Activated CD4-positive, alpha-beta memory T cell treated with anti-CD3 and anti-CD28 coated beads for 36 hours (primary cell): ENCODE measurements at regions of chr1 and their contacts with region 1.

Region 1: DNA sequence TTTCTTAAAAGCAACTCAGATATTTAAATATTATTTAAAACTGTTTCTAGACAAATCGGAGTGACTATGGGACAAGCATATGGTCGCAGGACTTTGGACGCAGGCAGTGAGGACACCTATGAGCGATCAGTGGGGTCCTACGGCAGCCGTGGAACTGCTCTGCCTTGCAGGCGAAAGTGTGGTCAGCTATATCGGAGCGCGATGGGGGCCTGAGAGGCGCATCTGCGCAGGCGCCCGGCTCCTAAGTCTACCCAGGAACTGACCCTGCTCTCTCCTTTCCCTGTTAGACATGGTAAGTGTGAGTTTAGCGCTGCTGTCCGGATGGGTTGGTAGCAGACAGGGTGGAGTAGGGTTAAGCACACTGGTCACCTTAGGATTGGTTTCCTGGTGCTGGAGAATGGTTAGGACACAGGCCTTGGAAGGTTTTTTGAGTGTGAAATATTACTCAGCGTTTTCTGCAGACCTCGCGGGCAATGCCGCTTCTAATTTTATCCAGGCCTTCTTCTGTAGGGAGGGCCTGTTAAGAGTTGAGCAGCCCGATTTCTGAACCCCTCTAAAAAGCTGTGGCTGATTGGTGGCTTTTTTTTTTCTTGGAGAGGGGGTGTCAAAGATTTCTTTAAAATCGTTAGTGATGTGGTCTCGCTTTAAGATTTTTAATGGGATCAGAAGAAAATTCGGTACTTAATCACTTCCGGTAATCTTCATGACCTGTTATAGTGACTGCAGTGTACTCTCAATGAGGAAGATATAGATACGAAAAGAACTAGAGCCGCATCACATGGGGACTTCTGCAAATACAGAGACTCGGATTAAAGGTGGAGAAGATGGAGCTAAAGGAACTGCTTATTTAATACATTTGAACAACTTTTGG is at the start of gene RABGGTB:
- DNase-seq: peak; percentile 96
- H3K4me3 Mint-ChIP-seq: peak within 1 kb of the TSS; percentile 99
- H3K27ac Mint-ChIP-seq: peak within 1 kb of the TSS; percentile 97
- H3K4me1 Mint-ChIP-seq: peaks cover 28% of the 10 kb centered on the region
- H3K27me3 Mint-ChIP-seq: no peaks in the 10 kb centered on the region
- total RNA-seq, gene RABGGTB: 158 to 170 TPM

Region 2: GRCh38 chr1:75712306-75712705 is 73.9 kb before region 1 on chr1:
- CTCF ChIA-PET with region 1: no interaction called
- POLR2A ChIA-PET with region 1: no interaction called
- intact Hi-C with region 1: no loop called
- DNase-seq: no peak
- H3K4me3 Mint-ChIP-seq: no peak overlapping the region
- H3K27ac Mint-ChIP-seq: no peak overlapping the region
- H3K4me1 Mint-ChIP-seq: no peaks in the 10 kb centered on the region
- H3K27me3 Mint-ChIP-seq: peaks cover 15% of the 10 kb centered on the region

Region 3: GRCh38 chr1:75724472-75725022 is 61.7 kb before region 1 on chr1 and contains the start of gene ACADM:
- CTCF ChIA-PET with region 1: interaction called, 3 read pairs
- POLR2A ChIA-PET with region 1: interaction called, 7 read pairs
- intact Hi-C with region 1: loop called (anchors 1 kb)
- DNase-seq: peak; percentile 91
- H3K4me3 Mint-ChIP-seq: peak within 1 kb of the TSS; percentile 100
- H3K27ac Mint-ChIP-seq: peak within 1 kb of the TSS; percentile 99
- H3K4me1 Mint-ChIP-seq: peaks cover 28% of the 10 kb centered on the region
- H3K27me3 Mint-ChIP-seq: no peaks in the 10 kb centered on the region
- total RNA-seq, gene ACADM: 60.3 to 60.9 TPM

Region 4: GRCh38 chr1:75796376-75797272 is 10.4 kb after region 1 on chr1 and contains the start of gene MSH4:
- CTCF ChIA-PET with region 1: no interaction called
- POLR2A ChIA-PET with region 1: interaction called, 20 read pairs
- intact Hi-C with region 1: no loop called
- DNase-seq: peak; percentile 25
- H3K4me3 Mint-ChIP-seq: no peak within 1 kb of the TSS
- H3K27ac Mint-ChIP-seq: peak within 1 kb of the TSS; percentile 1
- H3K4me1 Mint-ChIP-seq: peaks cover 14% of the 10 kb centered on the region
- H3K27me3 Mint-ChIP-seq: no peaks in the 10 kb centered on the region
- total RNA-seq, gene MSH4: 0.12 to 0.43 TPM

Region 5: GRCh38 chr1:76074321-76075187 is 288.3 kb after region 1 on chr1 and contains the start of gene ST6GALNAC3:
- CTCF ChIA-PET with region 1: no interaction called
- POLR2A ChIA-PET with region 1: no interaction called
- intact Hi-C with region 1: loop called (anchors 5 kb)
- DNase-seq: peak; percentile 81
- H3K4me3 Mint-ChIP-seq: peak within 1 kb of the TSS; percentile 76
- H3K27ac Mint-ChIP-seq: no peak within 1 kb of the TSS
- H3K4me1 Mint-ChIP-seq: peaks cover 13% of the 10 kb centered on the region
- H3K27me3 Mint-ChIP-seq: no peaks in the 10 kb centered on the region
- total RNA-seq, gene ST6GALNAC3: 0.26 to 0.41 TPM

Region 6: DNA sequence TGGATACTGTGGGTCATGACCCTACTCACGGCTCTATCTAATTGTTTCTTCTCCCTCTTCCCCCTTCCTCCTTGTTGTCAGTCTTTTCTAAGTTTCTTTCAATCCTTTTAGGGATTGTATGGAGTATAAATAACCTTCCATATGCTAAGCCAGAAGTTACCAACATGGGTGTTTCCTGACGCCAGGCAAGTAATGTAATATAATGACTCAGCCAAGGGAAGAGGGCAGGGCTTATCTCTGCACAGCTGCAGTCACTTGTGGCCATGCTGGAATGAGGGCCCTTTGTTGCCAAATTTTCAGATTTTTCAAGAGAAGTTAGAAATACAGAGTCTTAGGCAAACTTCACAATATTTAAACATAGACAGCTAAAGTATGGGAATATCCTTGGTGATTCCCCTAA is 482.9 kb after region 1 on chr1:
- CTCF ChIA-PET with region 1: no interaction called
- POLR2A ChIA-PET with region 1: no interaction called
- intact Hi-C with region 1: loop called (anchors 10 kb)
- DNase-seq: no peak
- H3K4me3 Mint-ChIP-seq: no peak overlapping the region
- H3K27ac Mint-ChIP-seq: no peak overlapping the region
- H3K4me1 Mint-ChIP-seq: peaks cover 48% of the 10 kb centered on the region
- H3K27me3 Mint-ChIP-seq: no peaks in the 10 kb centered on the region